Thyroid gland (tissue), 4 donors: ENCODE measurements at regions of chr2 and their contacts with region 1.

Region 1: GRCh38 chr2:187581125-187581896 is 27.1 kb upstream of the TFPI start:
- DNase-seq: no peak
- H3K4me3 ChIP-seq: peak overlapping the region in 1 of 3 donors; percentile 26
- H3K27ac ChIP-seq: no peak overlapping the region
- H3K4me1 ChIP-seq: no peaks in the 10 kb centered on the region
- H3K27me3 ChIP-seq: no peaks in the 10 kb centered on the region
- CTCF ChIP-seq: peak in 5 of 6 experiments; percentile 35 to 74 (median 62)
- POLR2A ChIP-seq: no peak

Region 2: GRCh38 chr2:187422282-187422681 is 159.0 kb before region 1 on chr2:
- intact Hi-C with region 1: no loop called
- DNase-seq: no peak
- H3K4me3 ChIP-seq: no peak overlapping the region
- H3K27ac ChIP-seq: no peak overlapping the region
- H3K4me1 ChIP-seq: no peaks in the 10 kb centered on the region
- H3K27me3 ChIP-seq: no peaks in the 10 kb centered on the region
- CTCF ChIP-seq: no peak
- POLR2A ChIP-seq: no peak

Region 3: DNA sequence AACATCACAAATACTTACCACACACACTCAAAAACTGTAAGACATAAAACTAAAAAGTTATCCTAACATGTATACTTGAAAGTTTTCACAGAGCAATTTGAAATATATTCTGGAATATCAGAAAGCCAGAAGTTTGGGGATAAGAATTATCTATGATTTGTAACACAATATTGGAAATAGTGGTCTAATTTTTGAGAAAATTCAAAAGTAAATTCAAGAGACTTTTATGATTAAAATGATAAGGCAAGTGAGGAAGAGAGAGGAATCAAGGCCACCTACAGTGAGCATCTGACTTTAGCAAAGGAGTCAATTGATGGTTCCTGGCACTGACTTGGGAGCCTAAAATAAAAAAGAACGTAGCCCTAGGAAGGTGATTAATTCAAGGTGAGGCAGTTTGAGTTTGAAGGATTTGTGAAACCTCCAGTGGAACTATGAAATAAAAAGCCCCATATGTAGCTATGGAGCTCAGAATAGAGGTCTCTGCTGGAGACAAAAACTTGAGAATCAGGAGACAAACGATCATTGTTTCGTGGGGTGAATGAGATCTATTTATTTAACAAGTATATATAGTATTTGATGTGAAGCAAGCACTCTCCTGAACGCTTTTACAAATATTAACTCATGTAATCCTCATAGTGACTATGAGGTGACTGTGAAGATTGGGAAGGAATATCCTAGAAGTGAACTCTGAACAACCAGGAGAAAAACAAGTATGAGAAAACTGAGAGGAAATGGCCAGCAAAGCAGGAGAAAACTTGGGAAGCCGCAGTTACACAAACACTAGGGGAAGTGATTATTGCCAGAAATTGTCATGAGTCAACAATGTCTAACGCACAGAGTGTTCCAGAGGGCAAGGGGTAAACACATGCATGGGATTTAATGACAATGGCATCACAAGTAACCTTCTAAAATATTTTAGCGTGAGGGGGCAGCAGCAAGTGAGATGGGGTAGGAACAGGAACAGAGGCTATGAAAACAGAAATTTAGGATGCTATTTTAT is 39.9 kb before region 1 on chr2:
- intact Hi-C with region 1: no loop called
- DNase-seq: no peak
- H3K4me3 ChIP-seq: no peak overlapping the region
- H3K27ac ChIP-seq: peak overlapping the region; percentile 65 to 85 (median 79)
- H3K4me1 ChIP-seq: peaks cover 0 to 3% of the 10 kb centered on the region in 2 donors
- H3K27me3 ChIP-seq: no peaks in the 10 kb centered on the region
- CTCF ChIP-seq: no peak
- POLR2A ChIP-seq: peak in 1 of 2 donors; percentile 15

Region 4: GRCh38 chr2:187842978-187843847 is 261.9 kb after region 1 on chr2:
- intact Hi-C with region 1: loop called (anchors 10 kb)
- DNase-seq: no peak
- H3K4me3 ChIP-seq: no peak overlapping the region
- H3K27ac ChIP-seq: no peak overlapping the region
- H3K4me1 ChIP-seq: no peaks in the 10 kb centered on the region
- H3K27me3 ChIP-seq: no peaks in the 10 kb centered on the region
- CTCF ChIP-seq: peak in 5 of 6 experiments; percentile 12 to 70 (median 65)
- POLR2A ChIP-seq: no peak